ENCODE measurements at regions of chr9 and their contacts with region 1.

Region 1: GRCh38 chr9:136949817-136950655 is 2.0 kb upstream of the LCN12 start:
- DNase-seq: peak; percentile 73
- ATAC-seq: peak; percentile 98
- H3K4me3 ChIP-seq: peak overlapping the region; percentile 77
- H3K27ac ChIP-seq: peak overlapping the region; percentile 53
- H3K4me1 ChIP-seq: peaks cover 7% of the 10 kb centered on the region
- H3K27me3 ChIP-seq: no peaks in the 10 kb centered on the region
- CTCF ChIP-seq: peak in 2 of 3 experiments; percentile 22 to 37; a peak in 2 of 6 replicates
- EP300 ChIP-seq: no peak
- POLR2A ChIP-seq: no peak
- RAD21 ChIP-seq: no peak

Region 2: GRCh38 chr9:137000177-137000883 is 50.3 kb after region 1 on chr9:
- CTCF ChIA-PET with region 1: interaction called, 12 read pairs
- POLR2A ChIA-PET with region 1: no interaction called
- RAD21 ChIA-PET with region 1: interaction called, 5 read pairs
- SMC1A ChIA-PET with region 1: interaction called, 6 read pairs
- in situ Hi-C with region 1: no loop called
- intact Hi-C with region 1: no loop called
- DNase-seq: peak; percentile 82
- ATAC-seq: peak; percentile 87
- H3K4me3 ChIP-seq: no peak overlapping the region
- H3K27ac ChIP-seq: no peak overlapping the region
- H3K4me1 ChIP-seq: peaks cover 37% of the 10 kb centered on the region
- H3K27me3 ChIP-seq: peaks cover 2 to 10% of the 10 kb centered on the region in 2 experiments; a peak in 3 of 4 replicates
- CTCF ChIP-seq: no peak
- EP300 ChIP-seq: peak; percentile 50 to 51; a peak in 2 of 4 replicates
- POLR2A ChIP-seq: no peak
- RAD21 ChIP-seq: no peak

Region 3: DNA sequence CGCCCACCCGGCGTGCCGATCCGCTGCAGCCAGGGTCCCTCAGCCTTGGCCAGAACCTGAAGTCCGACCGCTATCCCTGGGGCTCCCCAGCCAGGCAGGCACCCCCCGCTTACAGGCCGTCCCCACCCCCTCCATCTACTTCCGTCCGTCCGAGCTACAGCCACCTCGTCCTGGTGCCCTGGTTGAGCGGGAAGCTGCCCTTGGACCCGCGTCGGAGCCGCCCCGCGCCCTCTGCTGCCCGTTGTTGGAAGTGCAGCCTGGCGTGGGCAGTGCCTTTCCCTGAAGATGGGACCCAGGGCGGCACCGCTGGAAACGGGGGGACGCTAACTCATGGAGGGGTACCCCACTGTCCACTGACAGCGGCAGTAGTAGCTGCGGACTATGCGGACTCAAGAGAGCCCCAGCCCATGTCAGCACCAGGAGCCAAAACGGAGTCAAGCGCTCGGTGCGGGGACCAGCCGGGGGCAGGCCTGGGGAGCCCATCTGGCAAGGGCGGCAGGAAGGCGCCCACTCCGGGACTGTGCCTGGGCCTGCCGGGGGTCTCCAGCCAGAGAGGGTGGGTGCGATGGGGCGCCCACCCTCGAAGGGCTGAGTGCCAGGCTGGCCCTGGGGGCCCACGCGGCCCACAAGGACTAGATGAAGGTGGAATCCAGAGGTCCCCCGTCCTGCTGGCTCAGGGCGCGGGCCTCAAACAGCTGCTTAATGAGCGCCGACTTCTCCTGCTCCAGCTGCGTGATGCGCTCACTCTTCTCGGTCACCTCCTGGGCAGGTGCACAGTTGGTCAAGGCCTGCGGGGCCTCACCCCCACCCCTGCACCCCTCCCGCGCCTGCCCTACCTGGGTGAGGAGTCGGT is 114.2 kb after region 1 on chr9:
- CTCF ChIA-PET with region 1: interaction called, 16 read pairs
- POLR2A ChIA-PET with region 1: no interaction called
- RAD21 ChIA-PET with region 1: interaction called, 7 read pairs
- SMC1A ChIA-PET with region 1: interaction called, 9 read pairs
- in situ Hi-C with region 1: no loop called
- intact Hi-C with region 1: no loop called
- DNase-seq: no peak
- ATAC-seq: peak; percentile 49
- H3K4me3 ChIP-seq: no peak overlapping the region
- H3K27ac ChIP-seq: no peak overlapping the region
- H3K4me1 ChIP-seq: peaks cover 15% of the 10 kb centered on the region
- H3K27me3 ChIP-seq: no peaks in the 10 kb centered on the region
- CTCF ChIP-seq: peak; percentile 78 to 96 (median 85)
- EP300 ChIP-seq: no peak
- POLR2A ChIP-seq: no peak
- RAD21 ChIP-seq: peak; percentile 61